Natural killer cell (primary cell): ENCODE measurements at regions of chr19 and their contacts with region 1.

Region 1: GRCh38 chr19:53431399-53432087 is at the start of gene ZNF761:
- DNase-seq: peak; percentile 98 to 99
- ATAC-seq: peak; percentile 98 to 100 (median 99)
- H3K4me3 ChIP-seq: peak within 1 kb of the TSS; percentile 77
- H3K4me3 Mint-ChIP-seq: peak within 1 kb of the TSS; percentile 95
- H3K27ac ChIP-seq: peak within 1 kb of the TSS; percentile 77
- H3K27ac Mint-ChIP-seq: peak within 1 kb of the TSS; percentile 90 to 92
- H3K4me1 ChIP-seq: peaks cover 14% of the 10 kb centered on the region
- H3K4me1 Mint-ChIP-seq: peaks cover 27 to 32% of the 10 kb centered on the region in 2 donors
- H3K27me3 ChIP-seq: no peaks in the 10 kb centered on the region
- H3K27me3 Mint-ChIP-seq: no peaks in the 10 kb centered on the region
- CTCF ChIP-seq: peak; percentile 36
- total RNA-seq, gene ZNF761: 6.8 to 8.9 (median 8.5) TPM

Region 2: DNA sequence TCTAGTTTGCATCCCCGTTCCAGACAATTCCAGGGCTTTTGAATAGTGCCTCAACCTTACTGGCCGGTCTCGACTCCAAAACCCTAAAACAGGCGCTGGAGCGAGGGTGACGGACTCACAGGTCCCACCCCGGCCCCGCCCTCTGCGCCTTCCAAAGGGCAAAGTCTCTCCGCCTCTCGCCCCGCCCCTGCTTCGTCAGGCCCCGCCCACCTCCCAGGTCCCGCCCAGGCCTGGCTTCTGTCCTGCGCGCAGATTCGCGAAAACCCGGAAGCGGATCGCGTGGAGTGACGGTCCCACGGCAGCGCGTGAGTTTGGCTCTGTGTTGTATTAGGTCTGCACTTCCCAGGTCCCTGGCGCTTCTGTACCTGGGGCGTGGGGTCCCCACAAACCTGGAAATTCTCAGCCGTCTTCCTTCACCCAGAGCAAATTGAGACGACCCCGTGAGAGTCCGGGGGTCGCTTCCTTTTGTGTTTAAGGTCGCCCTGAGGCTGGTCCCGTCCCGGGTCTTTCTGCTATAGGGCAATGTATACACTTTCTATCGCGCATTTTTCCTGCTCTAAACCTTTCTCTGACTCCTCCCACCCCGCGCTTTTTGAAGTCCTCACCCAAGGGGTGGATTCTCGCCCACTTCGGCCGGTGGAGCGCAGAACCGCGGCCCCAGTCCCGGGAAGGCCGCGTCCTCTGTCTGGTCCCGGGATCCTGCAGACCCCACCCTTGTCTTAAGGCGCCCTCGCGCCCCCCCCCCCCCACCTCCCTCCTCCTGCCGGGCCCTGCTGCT is 36.1 kb after region 1 on chr19 and contains the start of gene ZNF813:
- intact Hi-C with region 1: loop called (anchors 2 kb)
- DNase-seq: peak; percentile 92 to 96
- ATAC-seq: peak; percentile 97 to 99 (median 98)
- H3K4me3 ChIP-seq: peak within 1 kb of the TSS; percentile 63
- H3K4me3 Mint-ChIP-seq: peak within 1 kb of the TSS; percentile 88
- H3K27ac ChIP-seq: peak within 1 kb of the TSS; percentile 57
- H3K27ac Mint-ChIP-seq: peak within 1 kb of the TSS; percentile 79 to 87
- H3K4me1 ChIP-seq: peaks cover 14% of the 10 kb centered on the region
- H3K4me1 Mint-ChIP-seq: peaks cover 32 to 33% of the 10 kb centered on the region in 2 donors
- H3K27me3 ChIP-seq: no peaks in the 10 kb centered on the region
- H3K27me3 Mint-ChIP-seq: peaks cover 13 to 17% of the 10 kb centered on the region in 2 donors
- CTCF ChIP-seq: no peak
- total RNA-seq, gene ZNF813: 2.5 to 5.0 (median 3.1) TPM